Activated CD8-positive, alpha-beta T cell treated with anti-CD3 and anti-CD28 coated beads, Interleukin-2, amount 10 ng/mL, durations not matched to agents 7 days and 5 days (primary cell): ENCODE measurements at regions of chr12 and their contacts with region 1.

Region 1: GRCh38 chr12:47397664-47398281 is 308.1 kb downstream of the RPAP3 start:
- DNase-seq: peak; percentile 68
- ATAC-seq: peak; percentile 86
- H3K4me3 Mint-ChIP-seq: peak overlapping the region; percentile 24
- H3K27ac Mint-ChIP-seq: peak overlapping the region; percentile 82
- H3K4me1 Mint-ChIP-seq: peaks cover 65% of the 10 kb centered on the region
- H3K27me3 Mint-ChIP-seq: no peaks in the 10 kb centered on the region

Region 2: GRCh38 chr12:47184812-47185211 is 213.0 kb before region 1 on chr12:
- CTCF ChIA-PET with region 1: interaction called, 45 read pairs
- POLR2A ChIA-PET with region 1: no interaction called
- DNase-seq: no peak
- ATAC-seq: no peak
- H3K4me3 Mint-ChIP-seq: no peak overlapping the region
- H3K27ac Mint-ChIP-seq: no peak overlapping the region
- H3K4me1 Mint-ChIP-seq: peaks cover 20% of the 10 kb centered on the region
- H3K27me3 Mint-ChIP-seq: no peaks in the 10 kb centered on the region

Region 3: DNA sequence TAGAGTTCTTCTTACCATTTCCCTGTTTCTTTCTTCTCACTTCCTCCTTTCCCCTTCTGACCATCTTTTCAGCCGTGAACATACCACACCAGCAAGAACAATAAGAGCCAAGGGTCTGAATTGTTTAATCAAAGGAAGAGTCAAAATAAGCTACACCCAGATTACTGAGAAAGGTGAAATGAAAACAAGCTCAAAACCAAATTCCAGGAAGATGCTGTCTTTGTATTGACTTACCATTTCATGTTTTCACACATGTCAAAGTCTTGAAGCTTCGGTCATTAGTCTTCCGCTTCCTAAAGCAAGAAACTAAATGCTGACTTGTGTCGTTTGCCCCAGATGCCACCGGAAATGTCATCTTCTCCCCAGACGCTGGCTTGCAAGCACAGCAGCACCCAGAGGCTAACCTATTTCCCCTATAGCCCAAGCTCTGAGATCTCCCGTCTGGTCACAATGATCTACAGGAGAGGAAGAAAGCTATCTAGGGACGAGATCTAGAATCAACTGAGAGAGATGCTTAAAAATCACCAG is 181.6 kb before region 1 on chr12:
- CTCF ChIA-PET with region 1: interaction called, 56 read pairs
- POLR2A ChIA-PET with region 1: interaction called, 184 read pairs
- DNase-seq: peak; percentile 92
- ATAC-seq: peak; percentile 54
- H3K4me3 Mint-ChIP-seq: peak overlapping the region; percentile 83
- H3K27ac Mint-ChIP-seq: peak overlapping the region; percentile 93
- H3K4me1 Mint-ChIP-seq: peaks cover 27% of the 10 kb centered on the region
- H3K27me3 Mint-ChIP-seq: no peaks in the 10 kb centered on the region

Region 4: GRCh38 chr12:47249719-47250357 is 147.9 kb before region 1 on chr12:
- CTCF ChIA-PET with region 1: no interaction called
- POLR2A ChIA-PET with region 1: no interaction called
- DNase-seq: no peak
- ATAC-seq: no peak
- H3K4me3 Mint-ChIP-seq: no peak overlapping the region
- H3K27ac Mint-ChIP-seq: no peak overlapping the region
- H3K4me1 Mint-ChIP-seq: peaks cover 7% of the 10 kb centered on the region
- H3K27me3 Mint-ChIP-seq: no peaks in the 10 kb centered on the region

Region 5: DNA sequence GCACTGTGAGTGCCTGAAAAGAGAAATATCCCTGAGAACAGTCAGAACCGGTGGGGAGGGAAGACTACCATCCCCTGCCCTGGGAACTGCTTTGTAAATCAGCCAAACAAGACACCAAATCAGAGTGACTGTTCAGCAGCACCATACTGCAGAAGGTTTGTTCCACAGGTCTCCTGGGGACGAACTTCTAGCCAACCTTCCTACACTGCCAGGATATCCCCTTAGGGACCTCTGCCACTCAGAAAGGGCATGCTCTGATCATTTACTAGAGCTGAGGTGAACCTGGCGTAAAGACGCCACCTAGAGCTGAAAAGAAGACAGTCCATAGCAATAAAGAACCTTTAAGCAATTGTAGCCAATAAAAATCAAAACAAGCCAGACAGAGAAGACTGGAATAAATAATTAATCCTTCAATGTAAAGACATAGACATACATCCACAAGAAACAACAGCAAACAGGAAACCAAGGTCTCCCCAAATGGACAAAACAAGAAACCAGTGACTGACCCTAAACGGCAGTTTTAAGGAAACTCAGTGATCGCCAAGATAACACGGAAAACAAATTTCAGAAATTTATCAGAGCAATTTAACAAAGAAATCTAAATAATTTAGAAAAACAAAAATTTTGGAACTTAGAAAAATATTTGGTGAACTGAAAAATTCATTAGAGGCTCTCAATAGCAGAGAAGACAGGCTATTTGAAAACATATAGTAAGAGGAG is 89.9 kb before region 1 on chr12:
- CTCF ChIA-PET with region 1: interaction called, 34 read pairs
- POLR2A ChIA-PET with region 1: interaction called, 5 read pairs
- DNase-seq: peak; percentile 76
- ATAC-seq: peak; percentile 92
- H3K4me3 Mint-ChIP-seq: peak overlapping the region; percentile 64
- H3K27ac Mint-ChIP-seq: peak overlapping the region; percentile 77
- H3K4me1 Mint-ChIP-seq: peaks cover 59% of the 10 kb centered on the region
- H3K27me3 Mint-ChIP-seq: no peaks in the 10 kb centered on the region

Region 6: GRCh38 chr12:47361389-47362021 is 36.3 kb before region 1 on chr12:
- CTCF ChIA-PET with region 1: interaction called, 53 read pairs
- POLR2A ChIA-PET with region 1: interaction called, 23 read pairs
- DNase-seq: peak; percentile 70
- ATAC-seq: peak; percentile 77
- H3K4me3 Mint-ChIP-seq: peak overlapping the region; percentile 75
- H3K27ac Mint-ChIP-seq: peak overlapping the region; percentile 98
- H3K4me1 Mint-ChIP-seq: peaks cover 60% of the 10 kb centered on the region
- H3K27me3 Mint-ChIP-seq: no peaks in the 10 kb centered on the region

Region 7: DNA sequence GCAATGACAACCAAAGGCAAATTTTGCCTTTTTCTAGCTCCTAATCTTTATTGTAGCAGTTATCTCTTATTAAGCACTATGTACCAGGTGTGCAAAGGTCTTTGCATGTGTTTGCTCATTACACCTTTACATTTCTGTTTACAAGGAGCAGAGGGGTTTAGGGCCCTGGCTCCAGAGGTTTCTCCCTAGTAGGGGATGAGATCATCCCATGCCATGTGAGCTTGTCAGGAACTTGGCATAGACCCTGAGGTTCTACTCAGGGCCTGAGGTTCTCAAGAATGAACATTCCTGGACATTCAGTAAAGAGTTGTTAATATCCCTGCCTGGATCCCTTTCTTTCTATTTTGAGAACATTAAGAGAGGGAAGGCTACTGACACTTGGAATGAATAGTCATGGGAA is 16.0 kb after region 1 on chr12:
- CTCF ChIA-PET with region 1: interaction called, 20 read pairs
- POLR2A ChIA-PET with region 1: no interaction called
- DNase-seq: no peak
- ATAC-seq: no peak
- H3K4me3 Mint-ChIP-seq: no peak overlapping the region
- H3K27ac Mint-ChIP-seq: no peak overlapping the region
- H3K4me1 Mint-ChIP-seq: peaks cover 38% of the 10 kb centered on the region
- H3K27me3 Mint-ChIP-seq: no peaks in the 10 kb centered on the region